ENCODE measurements at regions of chr11 and their contacts with region 1.

Region 1: GRCh38 chr11:70292863-70293262 is 22.4 kb downstream of the PPFIA1 start:
- DNase-seq: no peak
- H3K4me3 ChIP-seq: no peak overlapping the region
- H3K27ac ChIP-seq: no peak overlapping the region
- H3K4me1 ChIP-seq: no peaks in the 10 kb centered on the region
- H3K27me3 ChIP-seq: no peaks in the 10 kb centered on the region
- CTCF ChIP-seq: no peak
- EP300 ChIP-seq: no peak
- POLR2A ChIP-seq: no peak

Region 2: DNA sequence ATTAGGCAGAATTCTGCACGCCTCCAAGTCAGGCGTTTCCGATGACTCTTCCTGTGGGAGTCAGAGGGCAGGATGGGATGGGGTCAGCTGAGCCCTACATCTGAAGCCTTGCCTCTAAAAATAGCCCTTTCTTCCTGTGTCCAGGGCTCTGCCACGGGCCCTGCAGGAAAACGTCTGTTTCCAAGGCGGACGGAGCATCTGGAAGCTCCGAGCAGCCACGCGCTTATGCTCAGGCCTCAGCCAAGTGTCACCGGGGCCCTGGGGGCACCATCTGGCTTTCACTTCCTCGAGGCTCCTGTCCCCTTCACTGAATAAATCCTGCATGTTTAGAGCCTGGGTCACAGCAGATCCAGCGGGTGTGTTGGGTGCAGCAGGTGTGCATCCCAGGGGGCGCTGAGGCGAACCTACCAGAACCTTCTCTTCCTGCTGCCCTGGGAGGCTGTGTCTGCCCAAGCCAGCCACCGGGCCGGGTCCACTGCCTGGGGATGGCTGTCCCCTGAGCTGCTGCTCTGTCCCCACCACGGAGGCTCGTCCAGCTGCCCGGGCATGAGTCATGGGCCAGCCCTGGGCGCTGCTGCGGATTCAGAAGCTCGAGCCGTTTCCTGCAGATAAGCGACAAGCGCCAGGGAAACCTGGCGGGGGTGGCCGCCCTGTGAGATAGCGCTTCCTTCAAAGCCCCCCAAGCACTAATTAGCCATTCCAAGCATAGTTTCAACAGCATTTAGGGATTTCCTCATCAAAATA is 843.4 kb before region 1 on chr11:
- in situ Hi-C with region 1: no loop called
- intact Hi-C with region 1: no loop called
- DNase-seq: no peak
- H3K4me3 ChIP-seq: no peak overlapping the region
- H3K27ac ChIP-seq: peak overlapping the region; percentile 15 to 60 (median 40)
- H3K4me1 ChIP-seq: peaks cover 0 to 6% (median 2%) of the 10 kb centered on the region in 4 donors
- H3K27me3 ChIP-seq: no peaks in the 10 kb centered on the region
- CTCF ChIP-seq: no peak
- EP300 ChIP-seq: no peak
- POLR2A ChIP-seq: no peak

Region 3: DNA sequence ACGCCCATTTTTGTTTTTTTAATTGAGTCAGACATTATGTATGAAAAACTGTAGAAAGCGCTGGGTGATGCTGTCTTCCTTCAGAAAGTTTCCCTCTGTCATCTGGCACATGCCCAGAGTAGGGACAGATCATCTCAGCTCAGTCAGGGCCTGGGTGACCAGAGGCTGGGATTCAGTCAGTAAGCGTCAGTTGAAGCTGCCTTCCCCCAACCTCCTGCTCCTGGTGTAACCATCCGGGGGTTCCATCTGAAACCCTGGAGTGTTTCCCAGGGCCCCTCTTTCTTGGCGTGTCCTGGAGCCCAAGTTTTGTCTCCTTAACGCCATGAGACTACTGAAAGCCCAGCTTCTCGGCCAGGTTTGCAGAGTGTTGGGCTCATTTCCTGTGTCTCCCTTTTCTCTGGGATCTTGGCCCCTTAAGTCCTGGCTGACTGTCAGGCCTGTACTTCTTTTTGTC is 11.7 kb before region 1 on chr11:
- in situ Hi-C with region 1: no loop called
- intact Hi-C with region 1: loop called (anchors 1 kb)
- DNase-seq: no peak
- H3K4me3 ChIP-seq: no peak overlapping the region
- H3K27ac ChIP-seq: no peak overlapping the region
- H3K4me1 ChIP-seq: peaks cover 0 to 8% (median 0%) of the 10 kb centered on the region in 4 donors
- H3K27me3 ChIP-seq: no peaks in the 10 kb centered on the region
- CTCF ChIP-seq: no peak
- EP300 ChIP-seq: no peak
- POLR2A ChIP-seq: no peak

Measured in transverse colon (tissue), 4 donors.